Thyroid gland (tissue), 4 donors: ENCODE measurements at regions of chr2 and their contacts with region 1.

Region 1: GRCh38 chr2:152335010-152335725 is at the start of gene FMNL2:
- DNase-seq: peak; percentile 90
- H3K4me3 ChIP-seq: peak within 1 kb of the TSS; percentile 43 to 84 (median 46)
- H3K27ac ChIP-seq: peak within 1 kb of the TSS; percentile 75 to 91 (median 90)
- H3K4me1 ChIP-seq: peaks cover 14 to 22% of the 10 kb centered on the region in 2 donors
- H3K27me3 ChIP-seq: no peaks in the 10 kb centered on the region
- CTCF ChIP-seq: peak in 1 of 6 experiments; percentile 4
- POLR2A ChIP-seq: peak; percentile 47 to 91
- total RNA-seq, gene FMNL2: 37.7 to 60.9 (median 52.1) TPM

Region 2: DNA sequence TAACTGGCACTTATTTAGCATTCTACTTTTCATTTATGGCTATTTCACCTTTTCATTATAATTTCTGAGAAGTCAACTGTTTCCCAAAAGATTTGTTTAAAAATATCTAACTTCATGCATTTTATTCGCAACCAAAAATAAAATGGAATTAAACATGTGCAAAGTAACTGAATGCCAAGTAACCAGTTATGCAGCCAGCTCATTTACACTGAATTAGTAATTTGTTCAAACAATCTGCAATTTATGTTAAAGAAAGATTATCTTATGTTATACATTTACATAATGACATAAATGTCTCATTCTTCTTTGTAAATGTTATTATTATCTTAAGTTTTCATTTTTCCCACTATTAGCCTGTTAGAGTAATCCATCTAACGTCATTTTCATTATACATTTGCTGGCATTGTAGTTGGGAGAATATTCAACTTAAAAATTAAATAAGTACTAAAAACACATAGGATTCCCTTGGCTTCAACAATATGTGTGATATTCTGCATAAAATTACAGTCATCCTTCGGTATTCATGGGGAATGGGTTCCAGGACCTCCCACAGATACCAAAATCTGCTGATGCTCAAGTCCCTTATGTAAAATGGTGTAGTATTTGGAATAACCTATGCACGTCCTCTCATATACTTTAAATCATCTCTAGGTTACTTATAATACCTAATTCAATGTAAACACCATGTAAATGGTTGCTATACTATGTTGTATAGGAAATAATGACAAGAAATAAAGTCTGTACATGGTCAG is 115.9 kb before region 1 on chr2:
- intact Hi-C with region 1: loop called (anchors 10 kb)
- DNase-seq: no peak
- H3K4me3 ChIP-seq: no peak overlapping the region
- H3K27ac ChIP-seq: no peak overlapping the region
- H3K4me1 ChIP-seq: peaks cover 0 to 14% of the 10 kb centered on the region in 2 donors
- H3K27me3 ChIP-seq: no peaks in the 10 kb centered on the region
- CTCF ChIP-seq: no peak
- POLR2A ChIP-seq: no peak

Region 3: DNA sequence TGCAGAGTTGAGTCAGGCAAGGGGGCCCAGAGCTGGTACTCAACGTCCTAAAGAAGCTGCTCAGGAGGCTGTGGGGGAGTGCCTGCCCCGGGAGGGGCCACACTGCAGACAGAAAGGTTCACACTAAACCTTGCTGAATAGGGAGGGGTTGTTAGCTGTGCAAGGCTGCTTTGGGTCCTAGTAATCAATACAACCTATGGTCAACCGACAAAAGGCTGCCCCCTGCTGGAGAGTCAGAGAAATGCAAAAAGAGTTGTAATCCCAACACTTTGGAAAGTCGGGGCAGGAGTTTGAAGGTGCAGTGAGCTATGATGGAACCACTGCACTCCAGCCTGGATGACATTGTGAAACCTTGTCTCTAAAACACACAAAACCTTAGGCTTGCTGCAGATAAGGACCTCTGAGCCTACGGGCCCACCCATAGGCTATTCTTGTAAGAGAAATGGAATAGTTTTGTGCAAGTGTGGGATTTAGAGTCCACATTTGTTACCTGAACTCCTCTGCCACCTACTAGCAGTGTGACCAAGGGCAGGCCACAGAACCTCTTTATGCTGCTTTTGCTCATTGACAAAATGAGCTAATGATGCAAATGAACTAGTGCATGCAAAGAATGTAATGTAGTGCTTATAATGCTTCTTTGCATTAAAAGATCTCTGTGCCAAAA is 300.6 kb after region 1 on chr2:
- intact Hi-C with region 1: loop called (anchors 10 kb)
- DNase-seq: peak; percentile 48 to 67
- H3K4me3 ChIP-seq: no peak overlapping the region
- H3K27ac ChIP-seq: no peak overlapping the region
- H3K4me1 ChIP-seq: no peaks in the 10 kb centered on the region
- H3K27me3 ChIP-seq: no peaks in the 10 kb centered on the region
- CTCF ChIP-seq: peak; percentile 51 to 84 (median 80)
- POLR2A ChIP-seq: no peak